Heart right ventricle (tissue), 16 donors: ENCODE measurements at regions of chr18 and their contacts with region 1.

Region 1: GRCh38 chr18:64409511-64409910 is 260.6 kb upstream of the LINC00305 start:
- DNase-seq: no peak
- ATAC-seq: no peak
- H3K4me3 ChIP-seq: no peak overlapping the region
- H3K27ac ChIP-seq: no peak overlapping the region
- H3K4me1 ChIP-seq: no peaks in the 10 kb centered on the region
- H3K27me3 ChIP-seq: no peaks in the 10 kb centered on the region
- CTCF ChIP-seq: peak; percentile 15 to 63 (median 44)

Region 2: DNA sequence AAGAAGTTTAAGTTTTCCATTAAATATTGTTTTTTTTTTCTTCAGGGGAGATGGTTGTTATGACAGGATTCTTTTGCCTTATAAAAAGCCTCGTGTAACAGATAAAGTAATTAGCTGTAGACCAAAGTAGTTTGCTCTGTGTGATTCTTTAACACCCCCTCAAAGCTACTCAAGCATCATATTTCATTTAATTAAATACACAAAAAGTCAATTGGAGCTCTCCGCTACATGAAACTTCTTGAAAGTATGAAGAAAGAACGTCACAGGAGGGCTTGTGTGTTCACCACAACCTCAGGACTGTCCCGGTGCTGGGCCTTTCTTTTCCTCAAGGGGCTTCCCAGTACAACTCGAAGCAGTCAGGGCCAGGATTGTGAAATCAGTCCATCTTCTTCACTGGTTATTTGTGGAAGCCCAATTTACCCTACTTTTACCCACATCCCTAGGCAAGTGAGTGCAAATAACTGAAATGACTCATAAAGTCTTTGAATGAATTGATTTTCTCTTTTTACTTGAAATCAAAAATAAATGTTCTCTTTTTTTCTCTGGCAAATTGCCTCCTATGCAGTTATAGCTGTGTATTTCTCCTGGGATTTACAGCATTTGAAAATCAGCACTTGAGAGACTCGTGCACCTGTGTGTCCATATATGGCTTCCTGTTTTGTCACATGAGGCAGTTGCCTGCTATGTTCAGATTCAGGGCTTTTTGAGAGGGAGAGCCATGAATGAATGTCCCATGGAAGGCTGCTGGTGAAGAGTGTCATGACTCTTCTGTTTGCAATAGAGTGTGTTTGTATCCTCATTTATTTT is 309.2 kb before region 1 on chr18:
- intact Hi-C with region 1: loop called in 2 of 10 experiments (anchors 10 kb)
- DNase-seq: no peak
- ATAC-seq: no peak
- H3K4me3 ChIP-seq: no peak overlapping the region
- H3K27ac ChIP-seq: no peak overlapping the region
- H3K4me1 ChIP-seq: no peaks in the 10 kb centered on the region
- H3K27me3 ChIP-seq: peaks cover 0 to 4% (median 0%) of the 10 kb centered on the region in 7 donors
- CTCF ChIP-seq: no peak

Region 3: GRCh38 chr18:64119916-64120315 is 289.6 kb before region 1 on chr18:
- intact Hi-C with region 1: loop called in 2 of 10 experiments (anchors 10 kb)
- DNase-seq: no peak
- ATAC-seq: no peak
- H3K4me3 ChIP-seq: no peak overlapping the region
- H3K27ac ChIP-seq: no peak overlapping the region
- H3K4me1 ChIP-seq: no peaks in the 10 kb centered on the region
- H3K27me3 ChIP-seq: no peaks in the 10 kb centered on the region
- CTCF ChIP-seq: peak in 5 of 9 donors; percentile 13 to 39 (median 20)

Region 4: GRCh38 chr18:64233411-64233810 is 176.1 kb before region 1 on chr18:
- intact Hi-C with region 1: no loop called
- DNase-seq: no peak
- ATAC-seq: no peak
- H3K4me3 ChIP-seq: no peak overlapping the region
- H3K27ac ChIP-seq: no peak overlapping the region
- H3K4me1 ChIP-seq: no peaks in the 10 kb centered on the region
- H3K27me3 ChIP-seq: no peaks in the 10 kb centered on the region
- CTCF ChIP-seq: no peak

Region 5: GRCh38 chr18:64295839-64296238 is 113.7 kb before region 1 on chr18:
- intact Hi-C with region 1: no loop called
- DNase-seq: no peak
- ATAC-seq: no peak
- H3K4me3 ChIP-seq: no peak overlapping the region
- H3K27ac ChIP-seq: no peak overlapping the region
- H3K4me1 ChIP-seq: no peaks in the 10 kb centered on the region
- H3K27me3 ChIP-seq: no peaks in the 10 kb centered on the region
- CTCF ChIP-seq: no peak

Region 6: GRCh38 chr18:64929036-64929435 is 519.5 kb after region 1 on chr18:
- intact Hi-C with region 1: no loop called
- DNase-seq: no peak
- ATAC-seq: no peak
- H3K4me3 ChIP-seq: no peak overlapping the region
- H3K27ac ChIP-seq: no peak overlapping the region
- H3K4me1 ChIP-seq: no peaks in the 10 kb centered on the region
- H3K27me3 ChIP-seq: no peaks in the 10 kb centered on the region
- CTCF ChIP-seq: no peak